H1 (cell line): ENCODE measurements at regions of chr15 and their contacts with region 1.

Region 1: GRCh38 chr15:99213187-99213811 is 36.1 kb downstream of the TTC23 start:
- DNase-seq: peak; percentile 19 to 79
- H3K4me3 ChIP-seq: no peak overlapping the region
- H3K27ac ChIP-seq: no peak overlapping the region
- H3K4me1 ChIP-seq: no peaks in the 10 kb centered on the region
- H3K27me3 ChIP-seq: no peaks in the 10 kb centered on the region
- CTCF ChIP-seq: peak; percentile 46 to 81 (median 72)
- EP300 ChIP-seq: no peak
- POLR2A ChIP-seq: no peak
- RAD21 ChIP-seq: peak; percentile 90 to 91

Region 2: GRCh38 chr15:99110581-99111320 is 102.5 kb before region 1 on chr15:
- CTCF ChIA-PET with region 1: interaction called, 30 read pairs
- POLR2A ChIA-PET with region 1: no interaction called
- DNase-seq: no peak
- H3K4me3 ChIP-seq: no peak overlapping the region
- H3K27ac ChIP-seq: no peak overlapping the region
- H3K4me1 ChIP-seq: peaks cover 0 to 2% (median 0%) of the 10 kb centered on the region in 4 experiments; a peak in 1 of 7 replicates
- H3K27me3 ChIP-seq: peaks cover 15 to 20% (median 19%) of the 10 kb centered on the region in 4 experiments
- CTCF ChIP-seq: no peak
- EP300 ChIP-seq: no peak
- POLR2A ChIP-seq: no peak
- RAD21 ChIP-seq: no peak